BJ (cell line): ENCODE measurements at regions of chr19 and their contacts with region 1.

Region 1: GRCh38 chr19:45643024-45643926 is 4.1 kb upstream of the EML2 start:
- DNase-seq: no peak
- H3K4me3 ChIP-seq: no peak overlapping the region
- H3K27me3 ChIP-seq: no peaks in the 10 kb centered on the region
- CTCF ChIP-seq: peak; percentile 99

Region 2: GRCh38 chr19:45455707-45456499 is 187.4 kb before region 1 on chr19:
- CTCF ChIA-PET with region 1: interaction called, 3 read pairs
- POLR2A ChIA-PET with region 1: interaction called, 17 read pairs
- DNase-seq: peak; percentile 99
- H3K4me3 ChIP-seq: 0 out of 2 replicates have a peak overlapping the region, but pooled peaks have one; percentile 2
- H3K27me3 ChIP-seq: no peaks in the 10 kb centered on the region
- CTCF ChIP-seq: no peak

Region 3: GRCh38 chr19:45506246-45506990 is 136.9 kb before region 1 on chr19:
- CTCF ChIA-PET with region 1: interaction called, 11 read pairs
- POLR2A ChIA-PET with region 1: interaction called, 6 read pairs
- DNase-seq: no peak
- H3K4me3 ChIP-seq: peak overlapping the region; percentile 59
- H3K27me3 ChIP-seq: no peaks in the 10 kb centered on the region
- CTCF ChIP-seq: peak; percentile 72

Region 4: GRCh38 chr19:45584332-45585157 is 58.7 kb before region 1 on chr19 and contains the start of gene OPA3:
- CTCF ChIA-PET with region 1: interaction called, 37 read pairs
- POLR2A ChIA-PET with region 1: no interaction called
- DNase-seq: peak; percentile 99
- H3K4me3 ChIP-seq: peak within 1 kb of the TSS; percentile 69
- H3K27me3 ChIP-seq: no peaks in the 10 kb centered on the region
- CTCF ChIP-seq: no peak
- polyA plus RNA-seq, gene OPA3: 10.9 and 15.1 TPM in 2 replicates

Region 5: GRCh38 chr19:45607071-45608029 is 35.9 kb before region 1 on chr19:
- CTCF ChIA-PET with region 1: interaction called, 99 read pairs
- POLR2A ChIA-PET with region 1: no interaction called
- DNase-seq: no peak
- H3K4me3 ChIP-seq: peak overlapping the region; percentile 6; the same call in 1 of the 2 replicates
- H3K27me3 ChIP-seq: peaks cover 2% of the 10 kb centered on the region; the same call in 1 of the 2 replicates
- CTCF ChIP-seq: peak; percentile 95

Region 6: GRCh38 chr19:45681391-45682015 is 38.2 kb after region 1 on chr19:
- CTCF ChIA-PET with region 1: interaction called, 23 read pairs
- POLR2A ChIA-PET with region 1: no interaction called
- DNase-seq: no peak
- H3K4me3 ChIP-seq: peak overlapping the region; percentile 39
- H3K27me3 ChIP-seq: no peaks in the 10 kb centered on the region
- CTCF ChIP-seq: peak; percentile 91

Region 7: GRCh38 chr19:45729774-45730388 is 86.6 kb after region 1 on chr19:
- CTCF ChIA-PET with region 1: no interaction called
- POLR2A ChIA-PET with region 1: no interaction called
- DNase-seq: no peak
- H3K4me3 ChIP-seq: peak overlapping the region; percentile 97
- H3K27me3 ChIP-seq: no peaks in the 10 kb centered on the region
- CTCF ChIP-seq: no peak